Left lung (tissue), 14 donors: ENCODE measurements at regions of chr16 and their contacts with region 1.

Region 1: DNA sequence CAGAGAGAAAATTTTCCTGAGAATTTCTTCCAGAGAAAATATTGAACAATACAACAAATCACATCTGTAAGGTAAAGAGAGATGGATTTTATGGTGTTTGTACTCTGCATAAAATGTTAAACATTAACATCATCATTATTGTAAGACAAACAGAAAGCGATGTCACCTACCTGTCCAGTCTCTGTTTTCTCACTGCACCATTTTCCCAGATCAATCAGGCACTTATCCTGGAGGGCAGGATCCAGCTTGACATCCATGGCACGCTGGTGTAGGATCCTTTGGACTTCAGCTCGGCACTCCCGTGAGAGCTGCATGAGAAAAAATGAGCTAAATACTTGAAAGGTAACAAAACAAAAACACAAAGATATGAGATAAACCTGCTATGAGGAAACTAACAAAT is 55.9 kb upstream of the CLEC18B start:
- DNase-seq: no peak
- ATAC-seq: no peak
- H3K4me3 ChIP-seq: no peak overlapping the region
- H3K27ac ChIP-seq: no peak overlapping the region
- H3K4me1 ChIP-seq: peaks cover 6 to 10% of the 10 kb centered on the region in 2 donors
- H3K27me3 ChIP-seq: no peaks in the 10 kb centered on the region
- CTCF ChIP-seq: no peak

Region 2: GRCh38 chr16:74169687-74170376 is 307.4 kb before region 1 on chr16:
- intact Hi-C with region 1: no loop called
- DNase-seq: peak in 2 of 4 donors; percentile 82 to 88
- ATAC-seq: peak; percentile 26
- H3K4me3 ChIP-seq: no peak overlapping the region
- H3K27ac ChIP-seq: peak overlapping the region in 1 of 2 donors; percentile 62
- H3K4me1 ChIP-seq: no peaks in the 10 kb centered on the region
- H3K27me3 ChIP-seq: no peaks in the 10 kb centered on the region
- CTCF ChIP-seq: no peak

Region 3: GRCh38 chr16:74623214-74623842 is 146.1 kb after region 1 on chr16:
- intact Hi-C with region 1: loop called in 1 of 2 experiments (anchors 10 kb)
- DNase-seq: peak in 1 of 4 donors; percentile 48
- ATAC-seq: peak; percentile 76
- H3K4me3 ChIP-seq: no peak overlapping the region
- H3K27ac ChIP-seq: no peak overlapping the region
- H3K4me1 ChIP-seq: no peaks in the 10 kb centered on the region
- H3K27me3 ChIP-seq: no peaks in the 10 kb centered on the region
- CTCF ChIP-seq: peak; percentile 50 to 57